ENCODE measurements at regions of chr5 and their contacts with region 1.

Region 1: DNA sequence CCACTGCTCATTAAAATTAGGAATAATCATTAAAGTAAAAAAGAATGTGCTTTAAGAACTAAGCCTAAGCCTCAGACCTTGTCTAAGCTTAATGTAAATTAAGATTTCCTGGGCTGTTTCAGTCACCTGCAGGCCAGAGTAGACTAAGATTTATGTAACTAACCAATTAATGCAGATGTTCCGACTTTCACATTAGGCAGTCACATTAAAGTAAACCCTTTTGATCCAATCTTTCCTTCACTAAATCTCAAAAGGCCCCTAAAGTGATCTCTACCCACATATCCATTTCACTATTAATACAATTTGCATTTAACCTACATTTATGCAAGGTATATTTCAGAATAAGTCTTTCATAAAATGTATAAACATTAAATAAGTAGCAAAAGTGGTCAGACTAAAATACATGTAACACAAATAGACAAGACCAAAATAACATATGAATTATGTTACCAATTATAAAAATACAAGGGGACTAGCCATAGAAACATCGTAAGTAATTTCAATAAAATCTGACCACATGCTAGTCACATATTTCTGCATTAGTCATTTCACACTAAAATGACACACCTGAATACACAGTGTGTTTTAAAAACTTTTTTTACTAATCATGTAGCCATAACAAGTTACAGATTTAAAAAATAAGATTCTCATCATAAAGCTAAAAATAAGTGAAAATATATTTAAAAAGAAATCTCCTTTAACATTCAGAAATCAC is 7.7 kb downstream of the NR3C1 start:
- DNase-seq: no peak
- ATAC-seq: no peak
- H3K4me3 ChIP-seq: peak overlapping the region in 9 of 12 donors; percentile 16 to 95 (median 87)
- H3K27ac ChIP-seq: peak overlapping the region in 5 of 12 donors; percentile 8 to 30 (median 11)
- H3K4me1 ChIP-seq: peaks cover 0 to 100% (median 77%) of the 10 kb centered on the region in 12 donors
- H3K27me3 ChIP-seq: no peaks in the 10 kb centered on the region
- CTCF ChIP-seq: no peak
- POLR2A ChIP-seq: no peak

Region 2: DNA sequence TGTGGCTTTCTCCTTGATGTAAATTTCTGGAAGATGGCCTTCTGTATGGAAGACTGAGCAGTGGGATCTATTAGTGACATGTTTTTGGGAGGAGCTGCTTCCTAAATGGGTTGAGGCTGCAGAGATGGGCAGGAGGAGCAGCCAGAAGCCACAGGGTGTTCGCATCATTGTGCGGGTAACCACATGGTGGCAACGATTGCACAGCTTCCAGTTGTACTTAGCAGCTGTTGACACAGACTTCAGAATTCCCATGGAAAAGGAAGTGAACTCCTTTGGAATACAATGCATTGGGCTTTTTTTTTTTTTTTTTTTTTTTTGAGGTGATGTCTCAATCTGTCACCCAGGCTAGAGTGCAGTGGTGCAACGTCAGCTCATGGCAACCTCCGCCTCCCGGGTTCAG is 289.6 kb before region 1 on chr5:
- intact Hi-C with region 1: loop called in 6 of 10 experiments (anchors 2 to 10 kb)
- DNase-seq: peak in 4 of 5 donors; percentile 38 to 56 (median 50)
- ATAC-seq: peak; percentile 53 to 86 (median 68)
- H3K4me3 ChIP-seq: no peak overlapping the region
- H3K27ac ChIP-seq: no peak overlapping the region
- H3K4me1 ChIP-seq: peaks cover 0 to 66% (median 43%) of the 10 kb centered on the region in 12 donors
- H3K27me3 ChIP-seq: no peaks in the 10 kb centered on the region
- CTCF ChIP-seq: peak in 10 of 12 donors; percentile 8 to 55 (median 36)
- POLR2A ChIP-seq: no peak

Region 3: GRCh38 chr5:143222287-143223231 is 173.2 kb before region 1 on chr5:
- intact Hi-C with region 1: loop called in 1 of 10 experiments (anchors 10 kb)
- DNase-seq: no peak
- ATAC-seq: peak in 3 of 4 donors; percentile 20 to 29 (median 25)
- H3K4me3 ChIP-seq: no peak overlapping the region
- H3K27ac ChIP-seq: peak overlapping the region in 1 of 12 donors; percentile 38
- H3K4me1 ChIP-seq: peaks cover 0 to 52% (median 16%) of the 10 kb centered on the region in 12 donors
- H3K27me3 ChIP-seq: no peaks in the 10 kb centered on the region
- CTCF ChIP-seq: no peak
- POLR2A ChIP-seq: no peak

Region 4: DNA sequence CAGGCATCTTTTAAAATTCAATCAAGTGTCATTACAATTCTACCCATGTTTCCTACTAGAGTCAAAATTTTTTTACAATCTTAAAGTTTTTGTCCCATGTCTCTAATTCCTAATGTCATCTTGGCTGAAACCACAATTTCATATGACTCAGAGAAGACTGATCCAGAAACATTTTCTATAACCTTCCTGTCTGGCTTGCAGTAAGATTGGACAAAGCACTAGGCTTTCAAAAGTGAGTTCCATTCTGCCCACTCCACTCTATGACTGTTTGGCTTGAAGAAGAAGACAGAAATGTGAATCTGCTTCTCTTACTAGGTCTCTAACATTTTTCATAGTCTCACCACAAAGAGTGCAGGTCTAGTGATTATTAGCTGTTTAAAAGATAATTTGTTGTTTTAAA is 81.1 kb before region 1 on chr5:
- intact Hi-C with region 1: loop called in 2 of 10 experiments (anchors 5 to 10 kb)
- DNase-seq: no peak
- ATAC-seq: peak in 3 of 4 donors; percentile 26 to 78 (median 70)
- H3K4me3 ChIP-seq: no peak overlapping the region
- H3K27ac ChIP-seq: peak overlapping the region in 1 of 12 donors; percentile 12
- H3K4me1 ChIP-seq: peaks cover 8 to 82% (median 62%) of the 10 kb centered on the region in 12 donors
- H3K27me3 ChIP-seq: no peaks in the 10 kb centered on the region
- CTCF ChIP-seq: no peak
- POLR2A ChIP-seq: no peak

Region 5: DNA sequence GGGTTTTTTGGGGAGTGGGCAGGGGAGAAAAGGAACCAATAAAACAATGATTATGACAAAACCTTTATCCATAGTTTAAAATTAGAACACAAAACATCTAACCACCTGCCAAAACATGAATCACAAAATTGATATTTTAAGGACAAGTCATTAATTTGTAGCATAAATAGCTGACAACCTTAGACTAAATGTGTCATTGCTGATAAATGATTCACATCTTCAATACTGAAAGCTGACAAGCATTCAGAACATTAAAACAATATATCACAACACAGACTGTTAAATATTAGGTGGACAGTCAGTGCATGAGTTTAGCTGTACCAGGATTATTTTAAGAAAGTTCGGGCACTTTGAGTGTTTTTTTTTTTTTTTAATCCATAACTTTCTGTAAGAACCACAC is 63.8 kb before region 1 on chr5:
- intact Hi-C with region 1: no loop called
- DNase-seq: no peak
- ATAC-seq: no peak
- H3K4me3 ChIP-seq: no peak overlapping the region
- H3K27ac ChIP-seq: no peak overlapping the region
- H3K4me1 ChIP-seq: peaks cover 0 to 75% (median 33%) of the 10 kb centered on the region in 12 donors
- H3K27me3 ChIP-seq: no peaks in the 10 kb centered on the region
- CTCF ChIP-seq: no peak
- POLR2A ChIP-seq: no peak

Region 6: DNA sequence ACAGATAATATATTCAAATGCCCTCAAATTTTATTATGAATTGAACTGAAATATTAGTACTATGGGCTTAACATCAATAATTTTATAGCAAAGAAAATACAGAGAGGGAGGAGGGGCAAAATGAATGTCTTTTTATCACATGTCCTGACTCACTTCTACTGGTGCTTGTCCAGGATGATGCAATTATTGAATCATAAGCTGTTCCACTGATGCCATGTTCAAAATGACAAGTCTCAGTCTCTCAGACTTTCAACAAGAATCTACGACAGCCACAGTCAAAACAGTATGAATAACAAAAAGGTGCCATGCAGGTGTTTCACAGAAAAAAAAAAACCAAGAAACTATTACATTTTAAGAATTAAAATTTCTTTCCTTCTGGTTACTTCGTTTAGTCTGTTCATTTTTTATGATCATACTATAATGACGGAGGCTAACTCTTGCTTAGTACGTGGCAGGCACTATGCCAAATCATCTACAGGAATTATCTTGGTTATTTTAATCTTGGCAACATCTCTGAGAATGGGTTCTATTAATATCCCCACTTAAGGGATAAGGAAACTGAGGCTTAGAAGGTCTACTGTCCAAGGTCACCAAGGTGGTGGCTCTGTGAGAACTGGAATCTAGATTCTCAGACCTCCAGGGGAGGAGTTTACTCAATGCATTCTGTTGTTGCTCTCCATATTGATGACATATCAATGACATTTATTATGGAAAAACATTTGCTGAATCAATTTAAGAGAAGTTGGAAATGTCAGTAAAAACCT is 53.8 kb before region 1 on chr5:
- intact Hi-C with region 1: loop called in 3 of 10 experiments (anchors 5 to 10 kb)
- DNase-seq: no peak
- ATAC-seq: peak in 3 of 4 donors; percentile 41 to 83 (median 48)
- H3K4me3 ChIP-seq: no peak overlapping the region
- H3K27ac ChIP-seq: peak overlapping the region; percentile 0 to 81 (median 52)
- H3K4me1 ChIP-seq: peaks cover 15 to 90% (median 61%) of the 10 kb centered on the region in 12 donors
- H3K27me3 ChIP-seq: no peaks in the 10 kb centered on the region
- CTCF ChIP-seq: no peak
- POLR2A ChIP-seq: no peak

Region 7: DNA sequence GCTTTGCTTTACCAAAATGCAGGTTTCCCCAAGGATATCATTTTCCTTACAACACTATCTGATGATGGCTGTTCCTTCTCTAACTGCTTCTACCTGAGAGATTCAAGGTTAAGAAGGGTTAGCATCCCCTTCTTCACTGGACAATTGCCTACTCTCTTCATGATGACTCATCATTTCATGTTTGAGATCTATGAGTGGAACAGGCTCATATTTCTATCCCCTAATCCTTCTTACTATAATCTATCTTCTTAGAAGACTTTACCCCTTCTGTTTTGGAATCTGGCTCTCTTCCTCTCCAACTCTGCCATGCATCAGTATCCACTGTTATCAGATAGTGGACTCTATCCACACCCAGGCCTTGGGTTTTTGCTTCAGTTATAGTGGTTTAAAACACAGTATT is 46.6 kb before region 1 on chr5:
- intact Hi-C with region 1: loop called in 3 of 10 experiments (anchors 5 to 10 kb)
- DNase-seq: no peak
- ATAC-seq: no peak
- H3K4me3 ChIP-seq: no peak overlapping the region
- H3K27ac ChIP-seq: no peak overlapping the region
- H3K4me1 ChIP-seq: peaks cover 15 to 96% (median 78%) of the 10 kb centered on the region in 12 donors
- H3K27me3 ChIP-seq: no peaks in the 10 kb centered on the region
- CTCF ChIP-seq: no peak
- POLR2A ChIP-seq: no peak

Measured in heart left ventricle (tissue), 16 donors.